Posterior cingulate gyrus (tissue), 11 donors: ENCODE measurements at regions of chr3 and their contacts with region 1.

Region 1: GRCh38 chr3:33787328-33788009 is 11.0 kb upstream of the PDCD6IP start:
- DNase-seq: peak in 9 of 10 donors; percentile 16 to 90 (median 57)

Region 2: GRCh38 chr3:33372218-33373081 is 415.0 kb before region 1 on chr3:
- intact Hi-C with region 1: loop called (anchors 10 kb)
- DNase-seq: peak in 4 of 10 donors; percentile 52 to 60 (median 58)

Region 3: GRCh38 chr3:33636125-33636850 is 151.2 kb before region 1 on chr3:
- intact Hi-C with region 1: loop called (anchors 5 kb)
- DNase-seq: no peak